ENCODE measurements at regions of chr6 and their contacts with region 1.

Region 1: DNA sequence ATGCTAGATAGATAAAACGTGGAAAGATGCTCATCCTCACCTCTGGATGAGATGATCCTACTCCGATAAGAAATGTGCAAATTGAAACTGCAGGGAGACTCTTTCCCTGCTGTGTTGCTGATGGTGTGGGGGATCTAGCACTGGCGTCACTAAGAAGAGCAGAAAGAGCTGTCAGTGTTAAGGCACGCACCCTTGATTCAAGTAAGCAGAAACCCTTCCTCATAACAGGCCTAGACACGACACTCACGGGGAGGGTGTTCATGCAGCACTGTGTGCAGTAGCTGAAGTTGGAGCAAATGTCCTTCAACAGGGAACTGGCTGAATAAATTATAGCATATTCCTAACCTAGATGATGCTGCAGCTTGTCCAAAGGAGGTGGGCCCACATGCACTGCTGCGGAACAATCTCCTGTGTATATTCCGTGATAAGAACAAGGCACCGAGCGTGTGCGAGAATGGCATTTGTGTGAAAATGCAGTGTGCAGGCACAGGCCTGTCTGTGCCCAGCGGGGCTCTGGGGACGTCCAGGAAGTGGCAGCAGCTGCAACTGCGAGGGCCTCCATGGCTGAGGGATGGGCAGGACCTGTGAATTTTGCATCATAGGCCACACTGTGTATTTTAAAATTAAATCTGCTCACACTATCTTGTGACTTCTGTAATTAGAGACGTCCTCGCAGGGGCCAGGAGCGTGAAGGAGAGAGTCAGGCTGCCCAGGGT is 64.0 kb downstream of the TCP11 start:
- DNase-seq: no peak
- H3K4me3 ChIP-seq: no peak overlapping the region
- H3K27ac ChIP-seq: no peak overlapping the region
- H3K4me1 ChIP-seq: peaks cover 0 to 9% (median 4%) of the 10 kb centered on the region in 4 experiments; a peak in 5 of 7 replicates
- H3K27me3 ChIP-seq: no peaks in the 10 kb centered on the region
- CTCF ChIP-seq: no peak
- EP300 ChIP-seq: no peak
- POLR2A ChIP-seq: no peak
- RAD21 ChIP-seq: no peak

Region 2: GRCh38 chr6:35128496-35128895 is 51.3 kb after region 1 on chr6:
- CTCF ChIA-PET with region 1: interaction called, 10 read pairs
- POLR2A ChIA-PET with region 1: interaction called, 3 read pairs
- DNase-seq: no peak
- H3K4me3 ChIP-seq: no peak overlapping the region
- H3K27ac ChIP-seq: no peak overlapping the region
- H3K4me1 ChIP-seq: no peaks in the 10 kb centered on the region
- H3K27me3 ChIP-seq: no peaks in the 10 kb centered on the region
- CTCF ChIP-seq: no peak
- EP300 ChIP-seq: no peak
- POLR2A ChIP-seq: no peak
- RAD21 ChIP-seq: no peak